RWPE1 (cell line): ENCODE measurements at regions of chr11 and their contacts with region 1.

Region 1: GRCh38 chr11:1912289-1912878 is 7.1 kb upstream of the TNNT3 start:
- DNase-seq: no peak
- H3K27ac ChIP-seq: no peak overlapping the region
- CTCF ChIP-seq: no peak

Region 2: DNA sequence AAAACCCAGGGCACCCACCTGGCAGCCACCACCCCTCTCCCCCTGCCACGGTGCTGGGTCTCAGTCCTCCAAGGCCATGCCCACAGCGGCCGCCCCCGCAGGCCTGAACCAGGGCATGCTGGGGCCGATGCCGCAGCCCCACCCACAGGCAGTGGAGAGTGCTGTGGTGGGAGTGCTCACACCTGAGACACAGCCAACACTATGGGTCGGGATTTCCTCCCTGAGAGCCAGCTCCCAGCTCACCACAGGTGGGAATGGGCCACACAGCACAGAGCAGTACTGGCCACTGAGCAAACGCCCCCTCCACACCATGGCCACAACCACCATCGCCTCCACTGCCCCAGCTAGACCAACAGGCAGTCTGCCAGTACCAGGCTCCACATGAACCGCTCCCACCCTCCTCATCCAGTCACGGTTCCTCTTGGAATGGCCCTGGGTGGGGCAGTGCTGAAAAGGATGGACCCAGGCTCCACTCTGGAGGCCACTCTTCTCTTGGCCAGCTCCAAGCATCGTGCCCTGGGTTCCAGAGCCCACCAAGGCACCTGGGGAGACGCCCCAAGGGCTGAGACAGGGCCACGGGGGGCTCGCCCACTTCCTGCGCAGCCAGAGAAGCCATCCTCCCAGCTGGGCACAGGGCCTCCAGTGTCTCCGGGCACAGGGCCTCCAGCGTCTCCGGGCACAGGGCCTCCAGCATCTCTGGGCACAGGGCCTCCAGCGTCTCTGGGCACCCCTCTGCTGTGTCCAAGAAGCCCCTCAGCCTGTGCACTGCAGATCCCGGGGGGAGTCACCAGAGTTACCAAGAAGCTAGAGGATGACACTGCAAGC is 440.0 kb before region 1 on chr11:
- CTCF ChIA-PET with region 1: no interaction called
- POLR2A ChIA-PET with region 1: no interaction called
- DNase-seq: no peak
- H3K27ac ChIP-seq: no peak overlapping the region
- CTCF ChIP-seq: no peak

Region 3: DNA sequence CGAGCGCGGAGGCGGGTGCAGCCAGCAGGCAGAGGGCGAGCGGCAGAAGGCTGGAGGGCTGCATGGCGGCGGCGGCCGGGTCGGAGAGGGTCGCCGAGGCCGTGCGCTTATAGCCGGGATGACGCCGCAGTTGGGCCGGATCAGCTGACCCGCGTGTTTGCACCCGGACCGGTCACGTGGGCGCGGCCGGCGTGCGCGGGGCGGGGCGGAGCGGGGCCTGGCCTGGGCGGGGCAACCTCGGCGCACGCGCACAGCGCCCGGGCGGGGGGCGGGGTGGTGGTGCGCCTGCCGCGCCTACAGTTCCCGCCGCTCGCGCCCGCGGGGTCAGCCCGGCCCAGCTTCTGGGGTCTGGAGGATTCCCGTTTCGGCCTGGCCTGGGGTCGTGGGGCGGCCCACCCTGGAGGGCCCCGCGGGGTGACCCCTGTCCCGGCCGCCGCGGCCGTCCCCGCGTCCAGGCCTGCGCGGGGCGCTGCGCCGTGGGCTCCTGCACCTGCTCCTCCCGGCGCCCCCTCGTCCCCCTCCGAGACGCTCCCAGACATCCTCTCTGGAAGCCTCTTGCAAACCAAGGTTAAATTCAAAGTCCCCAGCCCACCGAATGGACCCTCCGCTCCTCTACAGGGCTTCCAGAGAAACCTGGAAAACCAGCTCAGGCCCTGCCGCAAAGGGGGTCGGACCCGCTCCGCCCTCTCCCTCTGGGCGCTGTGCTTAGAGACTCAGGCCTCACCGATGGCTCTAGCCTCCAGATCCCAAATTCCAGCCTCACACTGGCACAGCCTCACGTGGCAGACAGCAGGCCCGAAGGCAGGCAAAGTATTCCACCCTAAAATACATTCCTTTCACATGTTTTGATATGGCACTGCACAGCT is 148.4 kb before region 1 on chr11 and contains the start of gene CTSD:
- CTCF ChIA-PET with region 1: no interaction called
- POLR2A ChIA-PET with region 1: no interaction called
- DNase-seq: peak; percentile 94
- H3K27ac ChIP-seq: peak within 1 kb of the TSS; percentile 93
- CTCF ChIP-seq: no peak; the same call in 1 of the 2 replicates

Region 4: GRCh38 chr11:1807264-1807995 is 105.0 kb before region 1 on chr11:
- CTCF ChIA-PET with region 1: no interaction called
- POLR2A ChIA-PET with region 1: no interaction called
- DNase-seq: no peak
- H3K27ac ChIP-seq: no peak overlapping the region
- CTCF ChIP-seq: no peak

Region 5: GRCh38 chr11:1869427-1870325 is 42.7 kb before region 1 on chr11:
- CTCF ChIA-PET with region 1: no interaction called
- POLR2A ChIA-PET with region 1: no interaction called
- DNase-seq: no peak
- H3K27ac ChIP-seq: peak overlapping the region; percentile 100
- CTCF ChIP-seq: no peak

Region 6: DNA sequence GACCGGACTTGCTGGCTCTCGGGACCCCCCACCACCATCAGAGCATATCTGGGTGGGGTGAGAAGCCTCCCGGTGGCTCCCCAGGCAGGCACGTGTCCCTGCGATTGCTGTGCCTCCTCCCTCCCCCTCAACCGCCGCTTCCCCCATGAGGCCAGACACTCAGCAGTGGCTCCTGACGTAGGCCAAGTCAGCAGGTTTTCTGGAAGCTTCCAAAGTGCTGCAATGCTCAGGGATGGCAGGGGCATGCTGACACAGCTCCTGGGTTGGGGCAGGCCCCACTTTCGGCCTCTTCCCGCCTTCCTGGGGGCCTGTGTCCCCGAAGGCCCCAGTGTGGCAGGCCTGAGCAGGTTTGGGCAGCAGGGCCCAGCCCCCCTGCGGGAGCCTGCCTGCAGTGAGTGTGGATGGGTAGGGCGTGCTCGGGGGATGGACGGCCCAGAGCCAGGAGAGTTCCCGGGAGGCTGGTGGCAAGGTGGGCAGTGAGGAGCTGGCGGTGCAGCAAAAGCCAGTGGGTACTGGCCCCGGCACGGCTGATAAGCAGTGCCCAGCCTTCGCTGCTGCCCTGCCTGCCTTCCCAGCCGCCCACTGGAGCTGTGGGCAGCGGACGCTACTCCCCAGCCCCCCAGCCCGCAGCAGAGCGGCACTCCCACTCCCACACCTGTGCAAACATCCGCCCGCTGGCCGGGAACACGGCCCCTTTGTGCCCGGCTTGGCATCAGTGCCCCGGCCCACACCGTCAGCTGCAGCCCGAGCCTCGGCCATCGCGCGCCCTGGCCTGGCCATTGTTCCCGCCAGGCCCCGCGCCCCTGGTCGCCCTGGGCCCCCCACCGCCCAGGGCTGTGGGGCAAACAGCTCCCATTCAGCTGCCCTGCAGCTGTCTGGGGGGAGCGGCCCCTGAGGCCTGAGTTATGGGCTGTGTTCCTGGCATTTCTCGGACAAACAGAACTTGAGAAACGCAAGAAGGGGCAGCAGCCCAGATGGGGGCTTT is 662.5 kb after region 1 on chr11:
- CTCF ChIA-PET with region 1: interaction called, 10 read pairs
- POLR2A ChIA-PET with region 1: no interaction called
- DNase-seq: no peak
- H3K27ac ChIP-seq: peak overlapping the region; percentile 70
- CTCF ChIP-seq: no peak